Breast epithelium (tissue), 4 donors: ENCODE measurements at regions of chr2 and their contacts with region 1.

Region 1: DNA sequence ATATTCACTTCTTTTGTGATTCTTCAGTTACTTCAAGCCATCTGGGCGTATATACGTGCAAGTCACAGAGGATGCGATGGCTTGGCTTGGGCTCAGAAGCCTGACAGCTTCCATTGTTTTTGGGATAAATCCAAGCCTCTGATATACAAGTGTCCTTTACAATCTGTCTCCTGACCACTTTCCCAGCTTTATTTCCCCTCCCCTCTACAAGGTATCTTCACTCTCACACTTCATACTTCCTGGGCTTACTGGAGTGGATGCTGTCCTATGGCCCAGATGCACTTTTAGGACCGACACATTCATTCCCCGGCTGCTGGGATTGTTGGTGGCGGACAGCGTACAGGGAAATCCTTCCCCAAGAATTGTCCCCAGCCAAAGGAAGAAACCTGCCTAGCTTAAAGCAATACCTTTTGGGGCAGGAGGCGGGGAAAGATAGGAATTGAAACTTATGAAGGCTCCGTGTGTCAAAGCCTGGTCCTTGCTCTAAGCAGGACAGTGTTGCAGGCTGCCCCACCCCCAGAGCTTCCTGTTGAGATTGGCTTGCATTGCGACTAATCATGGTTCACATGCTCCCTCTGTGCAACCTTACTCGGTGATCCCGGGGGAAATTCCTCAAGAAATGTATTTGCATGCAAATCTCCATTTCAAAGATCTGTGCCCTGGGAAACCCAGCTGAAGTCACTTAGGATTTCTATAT is 802.9 kb upstream of the ID2 start:
- DNase-seq: no peak
- H3K4me3 ChIP-seq: no peak overlapping the region
- H3K27ac ChIP-seq: no peak overlapping the region
- H3K4me1 ChIP-seq: no peaks in the 10 kb centered on the region
- H3K27me3 ChIP-seq: no peaks in the 10 kb centered on the region
- CTCF ChIP-seq: no peak
- POLR2A ChIP-seq: no peak

Region 2: DNA sequence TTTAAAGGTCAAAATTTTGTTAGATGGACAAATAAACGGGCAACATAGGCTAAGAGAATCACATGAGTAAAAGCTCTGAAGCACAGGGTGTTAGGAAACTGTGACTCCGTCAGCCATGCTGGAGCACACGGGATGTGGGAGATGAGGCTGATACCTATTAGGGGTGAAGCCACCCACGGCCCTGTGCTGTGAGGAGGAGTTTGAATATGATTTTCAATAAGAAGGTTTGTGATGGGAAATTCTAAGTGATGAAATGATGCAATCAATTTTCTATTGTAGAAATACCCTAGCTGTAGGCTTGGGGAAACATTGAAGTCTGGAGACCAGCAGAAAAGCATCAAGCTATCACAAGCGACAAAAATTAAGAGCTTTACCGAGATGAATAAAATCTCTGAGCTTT is 1444.5 kb before region 1 on chr2:
- intact Hi-C with region 1: no loop called
- DNase-seq: no peak
- H3K4me3 ChIP-seq: no peak overlapping the region
- H3K27ac ChIP-seq: no peak overlapping the region
- H3K4me1 ChIP-seq: no peaks in the 10 kb centered on the region
- H3K27me3 ChIP-seq: no peaks in the 10 kb centered on the region
- CTCF ChIP-seq: no peak
- POLR2A ChIP-seq: no peak

Region 3: DNA sequence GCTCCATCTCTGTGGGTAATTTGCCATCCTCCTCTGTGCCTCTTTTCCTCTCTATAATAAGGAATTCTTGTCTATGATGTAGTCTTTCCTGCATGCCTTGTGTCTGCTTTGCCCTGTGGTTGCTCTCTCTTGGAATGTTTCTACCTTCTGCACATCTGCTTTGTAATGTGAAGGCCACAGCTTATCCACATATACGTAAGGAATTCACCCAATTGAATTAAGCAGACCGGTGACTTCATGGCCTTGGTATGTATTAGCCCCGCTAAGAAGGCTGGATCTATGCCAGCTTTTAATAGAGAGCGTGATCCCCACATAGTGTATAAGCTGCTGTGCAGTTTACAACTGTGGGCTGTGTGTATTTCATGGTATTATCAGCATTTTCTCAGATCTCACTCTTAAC is 687.0 kb before region 1 on chr2:
- intact Hi-C with region 1: loop called (anchors 10 kb)
- DNase-seq: no peak
- H3K4me3 ChIP-seq: no peak overlapping the region
- H3K27ac ChIP-seq: no peak overlapping the region
- H3K4me1 ChIP-seq: no peaks in the 10 kb centered on the region
- H3K27me3 ChIP-seq: no peaks in the 10 kb centered on the region
- CTCF ChIP-seq: no peak
- POLR2A ChIP-seq: no peak

Region 4: DNA sequence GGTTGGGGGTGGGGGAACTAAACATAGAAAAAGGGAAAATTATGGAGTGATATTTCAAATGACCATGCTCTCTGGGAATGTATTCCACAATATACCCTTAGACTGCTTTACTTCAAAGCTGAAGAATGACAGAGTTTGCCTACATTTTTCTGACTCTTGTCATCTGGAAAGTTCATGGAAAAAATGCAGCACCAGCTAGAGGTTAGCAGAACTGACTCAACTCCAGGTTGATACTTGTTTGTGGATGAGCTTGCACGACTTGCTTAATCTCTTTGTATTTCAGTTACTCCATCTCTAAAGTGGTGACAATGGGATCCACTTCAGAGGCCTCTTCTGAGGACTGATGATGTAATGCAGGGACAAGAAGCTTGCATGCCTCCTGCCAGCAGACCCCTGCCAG is 21.0 kb before region 1 on chr2:
- intact Hi-C with region 1: no loop called
- DNase-seq: no peak
- H3K4me3 ChIP-seq: no peak overlapping the region
- H3K27ac ChIP-seq: no peak overlapping the region
- H3K4me1 ChIP-seq: no peaks in the 10 kb centered on the region
- H3K27me3 ChIP-seq: no peaks in the 10 kb centered on the region
- CTCF ChIP-seq: no peak
- POLR2A ChIP-seq: no peak

Region 5: GRCh38 chr2:8421658-8422449 is 542.9 kb after region 1 on chr2:
- intact Hi-C with region 1: no loop called
- DNase-seq: no peak
- H3K4me3 ChIP-seq: no peak overlapping the region
- H3K27ac ChIP-seq: no peak overlapping the region
- H3K4me1 ChIP-seq: no peaks in the 10 kb centered on the region
- H3K27me3 ChIP-seq: no peaks in the 10 kb centered on the region
- CTCF ChIP-seq: no peak
- POLR2A ChIP-seq: no peak